WTC11 (cell line): ENCODE measurements at regions of chr7 and their contacts with region 1.

Region 1: DNA sequence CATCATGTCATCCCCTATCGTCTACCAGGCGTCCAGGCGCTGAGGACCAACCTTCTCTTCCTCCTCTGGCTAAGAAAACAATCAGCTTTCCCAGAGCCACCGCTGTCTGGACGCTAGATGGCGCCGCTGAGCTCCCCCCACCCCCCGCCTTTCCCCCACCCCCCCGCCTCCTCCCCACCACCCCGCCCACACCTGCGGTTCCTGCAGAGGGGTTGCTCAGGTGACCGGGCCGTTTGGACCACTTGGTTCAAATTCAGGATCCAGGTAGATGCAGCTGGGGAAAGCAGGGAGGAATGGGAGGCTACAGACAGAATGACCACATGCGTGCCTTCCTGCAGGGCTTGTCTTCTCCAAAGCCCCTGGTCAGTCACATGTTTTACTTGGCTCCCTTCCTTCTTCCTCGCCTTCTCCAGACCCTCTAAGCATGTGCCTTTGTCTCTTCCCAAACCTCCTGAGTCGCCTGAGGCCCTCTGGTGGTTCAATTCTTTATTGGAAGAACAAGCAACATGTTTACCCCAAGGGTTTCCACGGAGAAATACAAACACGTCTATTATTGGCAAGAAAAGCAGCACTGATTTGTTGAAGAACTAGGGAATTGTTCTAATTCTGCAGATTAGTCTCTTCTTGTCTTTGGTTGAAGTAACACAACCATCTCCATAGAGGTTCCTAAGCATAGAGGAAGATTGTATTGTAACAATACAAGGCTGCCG is 24.7 kb downstream of the AOC1 start:
- DNase-seq: peak; percentile 69
- ATAC-seq: peak; percentile 88
- H3K4me3 Mint-ChIP-seq: peak overlapping the region; percentile 37
- H3K27ac Mint-ChIP-seq: peak overlapping the region; percentile 35; the same call in 1 of the 2 replicates
- H3K4me1 Mint-ChIP-seq: peaks cover 16% of the 10 kb centered on the region
- H3K27me3 Mint-ChIP-seq: peaks cover 8% of the 10 kb centered on the region; the same call in 1 of the 2 replicates
- CTCF ChIP-seq: peak; percentile 52

Region 2: GRCh38 chr7:150778738-150779301 is 98.2 kb before region 1 on chr7:
- CTCF ChIA-PET with region 1: interaction called, 16 read pairs
- POLR2A ChIA-PET with region 1: no interaction called
- DNase-seq: peak; percentile 88
- ATAC-seq: peak; percentile 93
- H3K4me3 Mint-ChIP-seq: no peak overlapping the region
- H3K27ac Mint-ChIP-seq: no peak overlapping the region
- H3K4me1 Mint-ChIP-seq: no peaks in the 10 kb centered on the region
- H3K27me3 Mint-ChIP-seq: peaks cover 11% of the 10 kb centered on the region
- CTCF ChIP-seq: peak; percentile 81

Region 3: DNA sequence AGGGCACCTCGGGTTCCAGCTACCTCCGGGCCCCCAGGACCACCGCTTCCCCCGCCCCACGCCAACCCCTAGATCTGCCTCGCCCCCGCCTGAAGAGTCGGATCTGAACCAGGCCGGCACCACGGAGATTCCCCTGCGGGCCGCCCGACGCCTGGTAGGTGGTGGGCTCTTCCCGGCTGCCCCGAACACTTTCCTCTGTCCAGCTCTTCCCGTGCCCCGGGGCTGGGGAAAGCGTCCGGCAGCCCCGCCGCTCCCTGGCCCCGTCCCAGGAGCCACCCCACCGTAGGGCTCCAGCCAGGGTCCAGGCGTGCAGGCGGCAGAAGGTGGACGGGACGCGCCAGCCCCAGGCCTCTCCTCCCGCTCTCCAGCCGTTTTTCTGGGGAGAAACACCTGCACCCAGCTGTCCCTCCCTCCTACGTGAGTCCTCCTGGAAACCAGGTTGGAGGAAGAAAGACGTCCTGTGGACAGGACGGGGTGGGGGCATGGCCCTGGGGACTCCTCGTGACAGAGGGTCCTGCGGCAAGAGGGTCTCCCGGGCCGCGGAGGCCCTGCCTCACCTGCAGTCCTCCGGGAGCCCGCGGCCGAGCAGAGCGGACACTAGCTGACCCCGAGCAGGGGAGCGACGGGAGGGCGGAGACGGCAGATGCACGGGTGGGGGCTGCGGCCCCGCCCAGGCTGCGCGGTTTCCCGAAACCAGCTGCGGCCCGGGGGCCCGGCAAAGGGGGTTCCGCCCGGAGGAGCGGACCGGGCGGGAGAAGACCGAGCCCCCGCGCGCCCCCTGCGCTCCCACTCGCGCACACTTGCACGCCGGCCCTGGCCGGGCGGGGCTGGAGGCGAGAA is 77.0 kb before region 1 on chr7 and contains the start of gene TMEM176B:
- CTCF ChIA-PET with region 1: interaction called, 12 read pairs
- POLR2A ChIA-PET with region 1: no interaction called
- DNase-seq: peak; percentile 37
- ATAC-seq: peak; percentile 30
- H3K4me3 Mint-ChIP-seq: peak within 1 kb of the TSS; percentile 59
- H3K27ac Mint-ChIP-seq: no peak within 1 kb of the TSS
- H3K4me1 Mint-ChIP-seq: peaks cover 15% of the 10 kb centered on the region
- H3K27me3 Mint-ChIP-seq: peaks cover 70% of the 10 kb centered on the region
- CTCF ChIP-seq: no peak
- total RNA-seq, gene TMEM176B: 1.0 to 1.6 TPM (median 1.3 TPM) in 3 replicates

Region 4: DNA sequence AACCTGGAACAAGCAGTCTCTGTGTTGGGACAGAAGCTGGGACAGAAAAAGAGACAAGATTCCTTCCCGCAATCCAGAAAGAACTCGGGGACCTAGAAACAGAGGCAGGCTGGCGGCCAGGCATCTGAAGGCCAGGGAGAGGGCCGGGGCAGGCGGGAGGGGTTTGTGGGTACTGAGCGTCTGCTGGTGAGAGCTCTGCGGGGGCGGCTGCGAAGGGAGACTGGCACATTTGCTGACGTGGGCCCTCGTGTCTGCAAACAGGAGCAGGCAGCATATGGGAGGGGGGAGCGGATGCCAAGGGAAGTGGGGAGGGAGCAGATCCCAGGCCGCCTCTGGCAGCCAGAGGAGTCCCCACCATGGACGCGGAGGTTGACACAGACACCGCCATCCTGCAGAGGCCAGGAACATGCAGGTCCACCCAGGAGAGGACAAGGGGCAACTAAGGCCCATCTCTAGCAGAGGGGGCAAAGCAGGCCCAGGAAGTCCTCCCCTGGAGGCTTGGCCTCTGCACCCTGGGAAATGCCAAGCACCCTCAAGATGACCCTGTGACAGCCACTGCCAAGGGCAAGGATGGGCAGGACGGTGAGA is 69.0 kb after region 1 on chr7:
- CTCF ChIA-PET with region 1: interaction called, 13 read pairs
- POLR2A ChIA-PET with region 1: no interaction called
- DNase-seq: no peak
- ATAC-seq: no peak
- H3K4me3 Mint-ChIP-seq: no peak overlapping the region
- H3K27ac Mint-ChIP-seq: no peak overlapping the region
- H3K4me1 Mint-ChIP-seq: peaks cover 48% of the 10 kb centered on the region
- H3K27me3 Mint-ChIP-seq: peaks cover 6% of the 10 kb centered on the region
- CTCF ChIP-seq: no peak

Region 5: GRCh38 chr7:150988230-150989226 is 111.6 kb after region 1 on chr7:
- CTCF ChIA-PET with region 1: interaction called, 16 read pairs
- POLR2A ChIA-PET with region 1: no interaction called
- DNase-seq: peak; percentile 93
- ATAC-seq: peak; percentile 68
- H3K4me3 Mint-ChIP-seq: peak overlapping the region; percentile 71
- H3K27ac Mint-ChIP-seq: no peak overlapping the region
- H3K4me1 Mint-ChIP-seq: peaks cover 32% of the 10 kb centered on the region
- H3K27me3 Mint-ChIP-seq: peaks cover 32% of the 10 kb centered on the region
- CTCF ChIP-seq: peak; percentile 92

Region 6: GRCh38 chr7:151459726-151460473 is 582.9 kb after region 1 on chr7:
- CTCF ChIA-PET with region 1: no interaction called
- POLR2A ChIA-PET with region 1: no interaction called
- DNase-seq: no peak
- ATAC-seq: peak; percentile 26
- H3K4me3 Mint-ChIP-seq: no peak overlapping the region
- H3K27ac Mint-ChIP-seq: peak overlapping the region; percentile 61; the same call in 1 of the 2 replicates
- H3K4me1 Mint-ChIP-seq: peaks cover 72% of the 10 kb centered on the region
- H3K27me3 Mint-ChIP-seq: peaks cover 3% of the 10 kb centered on the region
- CTCF ChIP-seq: no peak